Tibial artery (tissue), 4 donors: ENCODE measurements at regions of chr5 and their contacts with region 1.

Region 1: DNA sequence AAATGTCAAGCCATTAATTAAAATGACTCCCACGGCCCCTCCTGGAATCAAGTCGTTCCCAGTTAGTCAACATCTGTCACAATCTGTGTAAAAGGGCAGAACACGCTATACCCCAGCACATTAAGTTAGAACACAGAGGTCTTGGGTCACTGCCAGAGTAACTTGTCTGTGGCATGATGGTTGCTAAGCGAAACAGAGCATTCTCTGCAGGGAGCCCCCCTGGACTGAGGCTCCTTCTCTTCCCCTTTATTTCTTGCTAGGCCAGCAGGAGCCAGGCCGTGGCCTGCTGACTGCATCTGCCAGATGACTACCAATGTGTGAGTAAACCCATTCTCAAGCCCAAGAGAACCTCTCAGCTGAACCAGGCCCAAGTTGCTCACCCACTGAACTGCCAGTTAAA is 51.9 kb upstream of the ZBED3 start:
- DNase-seq: peak in 1 of 2 donors; percentile 24
- H3K4me3 ChIP-seq: no peak overlapping the region
- H3K27ac ChIP-seq: no peak overlapping the region
- H3K4me1 ChIP-seq: peaks cover 0 to 4% (median 0%) of the 10 kb centered on the region in 4 donors
- H3K27me3 ChIP-seq: no peaks in the 10 kb centered on the region
- CTCF ChIP-seq: no peak

Region 2: DNA sequence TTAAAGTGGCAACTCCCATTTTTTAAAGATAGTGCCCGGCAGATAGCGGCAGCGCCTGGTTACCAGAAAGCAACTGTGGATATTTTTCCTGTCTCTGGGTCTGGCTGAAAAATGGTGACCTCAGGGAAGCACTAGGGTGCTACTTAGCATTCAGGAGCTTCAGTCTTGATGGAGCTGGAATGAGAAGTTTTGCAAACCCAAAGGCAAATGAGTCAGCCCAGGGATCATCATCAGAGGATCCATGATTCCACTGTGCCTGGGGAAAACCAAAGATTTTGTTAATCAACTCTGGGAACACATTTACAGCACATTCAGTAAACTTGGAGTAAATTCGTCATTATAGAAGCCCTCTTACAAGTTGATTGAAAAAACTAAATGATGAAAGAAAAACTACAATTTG is 396.4 kb before region 1 on chr5:
- intact Hi-C with region 1: no loop called
- DNase-seq: no peak
- H3K4me3 ChIP-seq: no peak overlapping the region
- H3K27ac ChIP-seq: no peak overlapping the region
- H3K4me1 ChIP-seq: no peaks in the 10 kb centered on the region
- H3K27me3 ChIP-seq: no peaks in the 10 kb centered on the region
- CTCF ChIP-seq: no peak

Region 3: DNA sequence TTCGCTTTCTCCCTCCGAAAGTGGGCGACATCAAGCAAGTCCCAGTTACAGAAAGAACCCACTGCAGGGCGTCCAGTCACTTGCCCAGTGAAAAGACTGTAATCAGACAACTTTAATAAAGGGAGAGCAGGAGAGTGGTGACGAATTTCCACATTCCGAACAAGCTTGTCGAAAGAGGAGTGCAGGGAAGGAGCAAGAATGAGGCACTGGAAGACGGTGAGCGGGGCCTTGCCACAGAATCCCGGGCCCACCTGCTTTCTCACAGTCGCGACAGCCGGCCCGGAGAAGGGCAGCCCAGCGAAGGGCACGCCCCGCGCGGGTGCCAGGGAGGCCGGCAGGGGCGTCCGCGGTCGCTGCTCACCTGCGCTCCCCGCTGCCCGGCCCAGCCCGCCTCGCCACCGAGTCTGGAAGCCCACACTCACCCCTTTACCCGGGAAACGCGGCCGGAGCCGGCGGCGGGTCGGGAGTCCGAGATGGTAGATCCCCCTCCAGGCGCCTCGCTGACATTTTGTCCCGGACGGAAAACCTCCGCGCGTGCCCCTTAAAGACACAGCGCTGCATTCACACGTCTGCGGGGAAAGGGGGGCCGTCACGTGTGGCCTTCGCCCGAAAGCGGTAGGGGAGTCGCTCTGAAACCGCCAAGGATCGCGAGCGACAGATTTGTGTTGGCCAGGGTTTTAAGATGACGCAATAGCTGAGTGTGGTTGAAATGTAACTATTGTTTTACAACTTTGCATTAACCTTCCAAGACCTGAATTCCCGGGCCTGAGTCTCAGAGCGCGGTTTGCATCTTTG is 52.1 kb before region 1 on chr5 and contains the start of gene ZBED3:
- intact Hi-C with region 1: loop called (anchors 5 kb)
- DNase-seq: peak; percentile 67 to 86
- H3K4me3 ChIP-seq: peak within 1 kb of the TSS; percentile 67 to 89
- H3K27ac ChIP-seq: peak within 1 kb of the TSS; percentile 84 to 94
- H3K4me1 ChIP-seq: peaks cover 0 to 19% (median 7%) of the 10 kb centered on the region in 4 donors
- H3K27me3 ChIP-seq: no peaks in the 10 kb centered on the region
- CTCF ChIP-seq: peak in 1 of 2 experiments; percentile 18